ENCODE measurements at regions of chr6 and their contacts with region 1.

Region 1: DNA sequence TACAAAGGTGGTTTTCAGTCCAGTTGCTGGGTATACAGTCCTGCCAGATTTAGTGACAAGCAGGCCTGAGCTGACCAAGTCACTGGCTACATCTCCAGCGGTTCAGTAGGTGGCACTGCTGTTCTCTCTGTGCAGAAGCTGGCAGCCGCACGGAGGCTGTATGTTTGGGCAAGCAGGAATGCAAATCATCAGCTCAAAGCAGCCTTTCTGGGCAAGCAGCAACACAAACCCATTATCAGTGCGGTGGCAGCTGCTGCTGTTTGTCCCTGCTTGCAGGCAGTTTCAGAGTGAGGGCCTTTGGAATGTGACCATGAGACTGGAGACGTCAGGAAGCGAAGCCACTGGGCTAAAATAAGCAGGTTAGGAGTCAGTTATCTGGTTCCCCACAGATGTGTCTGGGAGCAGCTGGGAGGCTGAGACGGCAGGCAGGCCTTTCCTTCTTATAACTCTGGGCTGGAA is 72.5 kb downstream of the TXLNB start:
- DNase-seq: peak; percentile 61
- ATAC-seq: peak; percentile 100
- H3K4me3 ChIP-seq: no peak overlapping the region
- H3K27ac ChIP-seq: peak overlapping the region; percentile 17; the same call in 1 of the 2 replicates
- H3K4me1 ChIP-seq: no peaks in the 10 kb centered on the region
- H3K27me3 ChIP-seq: no peaks in the 10 kb centered on the region
- CTCF ChIP-seq: peak; percentile 88

Region 2: GRCh38 chr6:139355172-139355571 is 135.9 kb after region 1 on chr6:
- CTCF ChIA-PET with region 1: no interaction called
- POLR2A ChIA-PET with region 1: no interaction called
- in situ Hi-C with region 1: no loop called
- intact Hi-C with region 1: loop called (anchors 5 kb)
- DNase-seq: no peak
- ATAC-seq: no peak
- H3K4me3 ChIP-seq: no peak overlapping the region
- H3K27ac ChIP-seq: no peak overlapping the region
- H3K4me1 ChIP-seq: no peaks in the 10 kb centered on the region
- H3K27me3 ChIP-seq: no peaks in the 10 kb centered on the region
- CTCF ChIP-seq: no peak